ENCODE measurements at regions of chr16 and their contacts with region 1.

Region 1: DNA sequence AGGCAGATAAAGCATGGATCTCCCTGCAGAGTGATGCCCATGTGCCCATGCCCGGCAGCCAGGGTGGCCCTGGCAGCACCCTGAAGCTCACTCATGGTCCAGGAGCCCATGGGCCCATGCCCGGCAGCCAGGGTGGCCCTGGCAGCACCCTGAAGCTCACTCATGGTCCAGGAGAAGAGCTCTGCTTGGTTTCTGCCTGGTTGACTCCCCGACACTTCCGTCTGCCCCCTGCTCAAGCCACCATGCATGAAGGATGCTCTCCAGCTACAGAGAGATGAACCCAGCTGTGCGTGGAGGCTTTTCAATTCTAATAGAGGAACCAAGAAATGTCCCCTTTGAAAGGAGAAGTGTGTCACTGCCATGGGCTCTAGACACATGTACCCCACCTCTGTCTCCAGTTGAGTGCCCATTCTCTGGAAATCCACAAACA is 8.7 kb downstream of the CCL17 start:
- DNase-seq: no peak
- H3K4me3 ChIP-seq: no peak overlapping the region
- CTCF ChIP-seq: no peak

Region 2: DNA sequence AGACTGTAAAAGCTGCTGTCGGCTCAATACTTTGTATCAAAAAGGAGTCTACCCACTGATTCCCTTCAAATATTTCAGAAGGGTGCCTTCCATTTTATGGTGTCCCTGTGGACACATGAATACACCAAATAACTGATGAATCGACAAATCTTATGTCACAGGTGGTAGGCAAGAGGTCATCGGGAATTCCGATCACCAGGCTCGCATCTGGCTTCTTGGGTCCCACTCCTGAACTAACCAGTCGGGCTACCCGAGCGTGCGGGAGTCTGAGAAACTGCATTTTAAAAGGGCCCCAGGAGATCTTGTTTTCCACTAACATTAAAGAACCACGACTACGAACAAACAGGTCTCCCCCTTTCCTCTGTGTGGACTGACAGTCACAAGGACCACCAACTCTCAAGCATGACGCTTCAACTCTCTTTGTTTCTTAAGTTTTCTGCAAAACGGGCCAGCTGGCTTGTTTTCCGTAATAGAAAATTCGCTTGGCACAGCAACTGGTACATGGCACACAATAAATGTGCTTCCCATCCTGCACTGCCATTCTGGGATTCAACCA is 228.3 kb before region 1 on chr16:
- in situ Hi-C with region 1: loop called (anchors 5 kb)
- DNase-seq: no peak
- H3K4me3 ChIP-seq: peak overlapping the region; percentile 82
- CTCF ChIP-seq: no peak

Region 3: GRCh38 chr16:57299719-57300386 is 113.5 kb before region 1 on chr16:
- in situ Hi-C with region 1: loop called (anchors 10 kb)
- DNase-seq: peak; percentile 86
- H3K4me3 ChIP-seq: peak overlapping the region; percentile 44
- CTCF ChIP-seq: peak; percentile 19

Region 4: DNA sequence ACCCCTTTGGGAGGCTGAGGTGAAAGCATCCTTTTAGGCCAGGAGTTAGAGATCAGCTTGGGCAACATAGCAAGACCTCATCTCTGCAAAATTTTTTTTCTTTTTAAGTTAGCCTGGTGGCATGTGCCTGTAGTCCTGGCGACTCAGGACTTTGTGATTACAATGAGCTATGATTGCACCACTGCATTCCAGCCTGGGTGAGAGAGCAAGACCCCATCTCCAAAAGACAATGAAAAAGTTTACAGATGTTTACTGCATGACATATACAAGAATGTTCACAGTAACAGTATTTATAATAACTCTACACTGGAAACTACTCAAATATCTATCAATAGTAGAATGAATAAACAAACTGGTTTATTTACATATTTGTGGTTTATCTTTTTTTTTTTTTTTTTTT is 87.9 kb before region 1 on chr16:
- in situ Hi-C with region 1: loop called (anchors 10 kb)
- DNase-seq: no peak
- H3K4me3 ChIP-seq: no peak overlapping the region
- CTCF ChIP-seq: no peak

Region 5: DNA sequence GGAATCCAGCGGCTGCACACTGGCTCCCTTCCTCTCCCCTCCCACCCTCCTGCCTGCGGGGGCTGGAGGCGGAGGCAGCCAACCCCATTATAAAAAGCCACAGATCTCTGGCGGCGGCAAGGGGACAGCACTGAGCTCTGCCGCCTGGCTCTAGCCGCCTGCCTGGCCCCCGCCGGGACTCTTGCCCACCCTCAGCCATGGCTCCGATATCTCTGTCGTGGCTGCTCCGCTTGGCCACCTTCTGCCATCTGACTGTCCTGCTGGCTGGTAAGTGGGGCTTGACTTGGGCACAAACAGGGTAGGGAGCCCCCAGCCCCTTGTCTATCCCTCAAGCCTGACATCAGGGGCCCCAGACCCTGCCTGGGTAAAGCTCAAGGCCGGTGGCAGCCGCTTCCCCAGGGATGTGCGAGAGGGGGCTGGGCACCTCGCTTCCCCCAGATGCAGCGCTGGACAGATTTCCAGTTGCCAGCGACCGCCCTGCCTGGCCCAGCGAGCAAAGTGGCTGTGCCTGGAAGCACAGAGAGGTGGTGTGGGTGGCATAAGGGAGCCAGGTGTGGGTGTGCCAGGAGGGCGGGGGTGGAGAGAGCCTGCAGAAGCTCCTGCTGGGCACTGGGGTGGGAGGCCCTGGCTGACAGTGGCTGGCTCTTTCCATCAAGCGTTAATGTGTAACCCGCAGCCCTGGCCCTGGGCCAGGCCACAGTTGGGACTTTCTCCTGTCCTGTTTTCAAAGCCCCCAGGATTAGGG is 40.8 kb before region 1 on chr16 and contains the start of gene CX3CL1:
- in situ Hi-C with region 1: no loop called
- DNase-seq: peak; percentile 20
- H3K4me3 ChIP-seq: peak within 1 kb of the TSS; percentile 24
- CTCF ChIP-seq: peak; percentile 22

Region 6: GRCh38 chr16:57507136-57508034 is 94.1 kb after region 1 on chr16:
- in situ Hi-C with region 1: loop called (anchors 5 kb)
- DNase-seq: no peak
- H3K4me3 ChIP-seq: no peak overlapping the region
- CTCF ChIP-seq: no peak

Measured in astrocyte of the cerebellum (primary cell).